CD8-positive, alpha-beta memory T cell (primary cell): ENCODE measurements at regions of chr11 and their contacts with region 1.

Region 1: DNA sequence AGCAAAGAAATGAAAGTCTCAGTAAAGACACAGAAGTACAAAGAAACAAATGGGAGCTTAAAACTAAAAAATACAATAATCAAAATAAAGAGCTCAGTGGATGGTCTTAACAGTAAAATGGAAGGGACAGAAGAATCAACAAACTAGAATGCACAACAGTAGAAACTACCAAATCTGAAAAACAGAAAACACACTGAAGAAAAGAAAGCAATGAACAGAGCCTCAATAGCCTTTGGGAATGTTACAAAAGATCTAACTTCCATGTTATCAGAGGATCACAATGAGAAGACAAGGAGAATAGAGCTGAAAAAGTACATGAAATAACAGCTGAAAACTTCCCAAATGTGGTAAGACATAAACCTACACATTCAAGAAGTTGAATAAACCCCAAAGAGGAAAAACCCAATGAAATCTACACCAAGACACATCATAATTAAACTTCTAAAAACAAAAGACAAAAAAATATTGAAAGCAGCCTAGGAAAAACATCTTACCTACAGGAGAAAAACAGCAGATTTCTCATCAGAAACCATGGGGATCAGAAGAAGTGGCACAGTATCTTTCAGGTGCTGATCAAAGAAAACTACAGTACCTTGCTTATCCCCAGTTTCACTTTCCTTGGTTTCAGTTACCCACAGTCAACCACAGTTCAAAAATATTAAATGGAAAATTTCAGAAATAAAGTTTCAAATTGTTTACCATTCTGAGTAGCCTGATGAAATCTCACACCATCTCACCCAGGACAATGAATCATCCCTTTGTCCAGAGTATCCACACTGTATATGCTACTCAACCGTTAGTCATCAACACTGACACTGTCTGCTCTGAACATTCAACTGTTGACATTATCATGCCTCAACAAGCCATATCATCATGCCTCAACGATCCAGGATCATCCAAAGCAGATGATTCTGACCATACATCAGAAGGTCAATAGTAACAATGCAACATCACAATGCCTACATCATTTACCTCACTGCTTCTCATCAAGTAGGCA is 22.2 kb downstream of the RRAS2 start:
- DNase-seq: no peak
- H3K4me3 ChIP-seq: no peak overlapping the region
- H3K4me3 Mint-ChIP-seq: peak overlapping the region in 4 of 7 donors; percentile 9 to 47 (median 20)
- H3K27ac ChIP-seq: no peak overlapping the region
- H3K27ac Mint-ChIP-seq: peak overlapping the region in 4 of 8 donors; percentile 15 to 75 (median 26)
- H3K4me1 ChIP-seq: no peaks in the 10 kb centered on the region
- H3K4me1 Mint-ChIP-seq: peaks cover 58 to 66% (median 65%) of the 10 kb centered on the region in 3 donors
- H3K27me3 ChIP-seq: no peaks in the 10 kb centered on the region
- H3K27me3 Mint-ChIP-seq: no peaks in the 10 kb centered on the region

Region 2: GRCh38 chr11:14275076-14275475 is 61.7 kb before region 1 on chr11:
- CTCF ChIA-PET with region 1: no interaction called
- POLR2A ChIA-PET with region 1: interaction called, 13 read pairs
- DNase-seq: no peak
- H3K4me3 ChIP-seq: no peak overlapping the region
- H3K4me3 Mint-ChIP-seq: no peak overlapping the region
- H3K27ac ChIP-seq: no peak overlapping the region
- H3K27ac Mint-ChIP-seq: peak overlapping the region in 2 of 8 donors; percentile 16 to 25
- H3K4me1 ChIP-seq: peaks cover 24% of the 10 kb centered on the region
- H3K4me1 Mint-ChIP-seq: peaks cover 23 to 41% (median 37%) of the 10 kb centered on the region in 3 donors
- H3K27me3 ChIP-seq: no peaks in the 10 kb centered on the region
- H3K27me3 Mint-ChIP-seq: no peaks in the 10 kb centered on the region